ENCODE measurements at regions of chr14 and their contacts with region 1.

Region 1: GRCh38 chr14:24332268-24332993 is 2.4 kb downstream of the ADCY4 start:
- DNase-seq: peak; percentile 22

Region 2: GRCh38 chr14:24431569-24432258 is 99.3 kb after region 1 on chr14:
- in situ Hi-C with region 1: loop called (anchors 10 kb)
- DNase-seq: peak; percentile 66

Measured in Caki2 (cell line).